CD14-positive monocyte (primary cell): ENCODE measurements at regions of chr16 and their contacts with region 1.

Region 1: DNA sequence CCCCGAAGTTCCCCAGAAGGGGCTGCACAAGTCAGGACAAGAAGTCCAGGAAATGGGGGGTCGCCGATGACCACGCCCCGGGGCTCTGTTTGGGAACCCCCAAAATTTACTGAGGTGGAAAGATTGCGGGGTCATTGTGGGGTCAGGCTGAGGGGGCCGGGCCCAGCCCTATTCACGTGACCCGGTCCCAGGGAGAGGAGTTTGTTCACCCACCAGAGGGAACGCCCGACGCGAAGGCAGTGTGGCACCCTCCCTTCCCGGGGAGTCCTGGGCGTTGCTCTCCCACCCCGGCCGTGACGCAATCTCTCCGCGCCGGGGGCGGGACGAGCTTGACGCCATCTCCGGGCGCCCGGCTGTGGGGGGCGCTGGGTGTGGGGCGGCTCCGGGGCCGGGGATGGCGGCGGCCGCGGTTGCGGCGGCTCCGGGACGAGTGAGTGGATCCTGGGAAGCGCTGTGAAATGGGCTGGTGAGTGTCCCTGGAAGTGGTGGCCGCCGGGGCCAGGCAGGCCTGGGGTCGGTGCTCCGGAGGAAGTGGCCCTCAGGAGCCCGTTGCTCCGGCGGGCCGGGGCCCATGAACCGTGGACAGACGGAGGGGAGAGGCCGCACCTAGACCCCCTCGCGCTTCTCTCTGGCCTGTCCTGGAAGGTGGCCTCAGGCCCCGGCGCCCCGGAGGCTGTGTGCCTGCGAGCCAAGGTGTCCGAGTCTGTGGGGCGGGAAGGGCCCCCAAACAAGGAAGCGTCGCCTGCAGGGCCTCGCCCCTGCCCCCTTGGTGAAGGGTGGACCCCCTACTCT is at the start of gene ATXN1L:
- DNase-seq: peak; percentile 85 to 96 (median 95)
- H3K4me3 ChIP-seq: peak within 1 kb of the TSS; percentile 74 to 98 (median 90)
- H3K4me3 Mint-ChIP-seq: peak within 1 kb of the TSS; percentile 90 to 93
- H3K27ac ChIP-seq: peak within 1 kb of the TSS; percentile 55 to 96
- H3K27ac Mint-ChIP-seq: peak within 1 kb of the TSS; percentile 91 to 98 (median 97)
- H3K4me1 ChIP-seq: peaks cover 13 to 21% of the 10 kb centered on the region in 2 donors
- H3K4me1 Mint-ChIP-seq: peaks cover 20% of the 10 kb centered on the region
- H3K27me3 ChIP-seq: no peaks in the 10 kb centered on the region
- H3K27me3 Mint-ChIP-seq: peaks cover 0 to 4% (median 2%) of the 10 kb centered on the region in 3 donors
- CTCF ChIP-seq: no peak
- polyA plus RNA-seq, gene ATXN1L: 6.7 to 27.9 (median 10.0) TPM

Region 2: DNA sequence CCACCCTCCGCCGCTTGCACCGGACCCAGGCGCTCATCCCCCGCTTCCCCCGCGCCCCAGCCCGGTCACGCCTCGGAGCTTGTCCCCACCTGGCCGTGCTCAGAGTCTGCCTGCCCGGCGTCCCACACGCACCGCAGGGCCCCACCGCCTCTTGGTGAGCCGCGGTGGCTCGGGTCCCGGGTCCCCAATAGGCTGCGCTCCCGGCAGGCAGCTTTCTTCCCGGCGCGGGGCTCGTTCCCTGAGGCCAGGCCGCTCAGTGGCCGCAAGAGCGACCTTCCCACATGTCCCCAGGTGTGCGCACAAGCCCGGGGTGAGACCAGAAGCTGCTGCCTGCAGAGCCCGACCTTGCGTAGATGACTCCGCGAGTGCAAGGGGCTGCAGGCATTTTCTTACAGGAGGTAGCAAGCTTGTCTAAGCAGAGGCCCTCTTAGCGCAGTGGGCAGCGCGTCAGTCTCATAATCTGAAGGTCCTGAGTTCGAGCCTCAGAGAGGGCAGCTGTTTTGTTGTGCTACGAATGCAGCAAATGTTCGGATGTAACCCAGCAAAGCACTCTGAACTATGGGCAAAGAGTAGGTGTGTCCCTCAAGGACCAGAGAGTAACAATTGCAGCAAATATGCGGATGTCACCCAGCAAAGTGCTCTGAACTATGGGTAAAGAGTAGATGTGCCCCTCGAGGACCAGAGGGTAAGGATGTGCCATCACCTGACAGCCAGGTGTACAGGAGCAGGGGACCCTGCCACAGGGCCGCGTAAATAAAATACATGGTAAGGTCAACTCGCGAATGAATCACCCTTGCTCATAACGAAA is 419.6 kb before region 1 on chr16:
- intact Hi-C with region 1: no loop called
- DNase-seq: no peak
- H3K4me3 ChIP-seq: no peak overlapping the region
- H3K4me3 Mint-ChIP-seq: peak overlapping the region in 1 of 2 donors; percentile 71
- H3K27ac ChIP-seq: no peak overlapping the region
- H3K27ac Mint-ChIP-seq: no peak overlapping the region
- H3K4me1 ChIP-seq: no peaks in the 10 kb centered on the region
- H3K4me1 Mint-ChIP-seq: no peaks in the 10 kb centered on the region
- H3K27me3 ChIP-seq: peaks cover 17 to 27% of the 10 kb centered on the region in 2 donors
- H3K27me3 Mint-ChIP-seq: peaks cover 36 to 42% (median 38%) of the 10 kb centered on the region in 3 donors
- CTCF ChIP-seq: no peak

Region 3: DNA sequence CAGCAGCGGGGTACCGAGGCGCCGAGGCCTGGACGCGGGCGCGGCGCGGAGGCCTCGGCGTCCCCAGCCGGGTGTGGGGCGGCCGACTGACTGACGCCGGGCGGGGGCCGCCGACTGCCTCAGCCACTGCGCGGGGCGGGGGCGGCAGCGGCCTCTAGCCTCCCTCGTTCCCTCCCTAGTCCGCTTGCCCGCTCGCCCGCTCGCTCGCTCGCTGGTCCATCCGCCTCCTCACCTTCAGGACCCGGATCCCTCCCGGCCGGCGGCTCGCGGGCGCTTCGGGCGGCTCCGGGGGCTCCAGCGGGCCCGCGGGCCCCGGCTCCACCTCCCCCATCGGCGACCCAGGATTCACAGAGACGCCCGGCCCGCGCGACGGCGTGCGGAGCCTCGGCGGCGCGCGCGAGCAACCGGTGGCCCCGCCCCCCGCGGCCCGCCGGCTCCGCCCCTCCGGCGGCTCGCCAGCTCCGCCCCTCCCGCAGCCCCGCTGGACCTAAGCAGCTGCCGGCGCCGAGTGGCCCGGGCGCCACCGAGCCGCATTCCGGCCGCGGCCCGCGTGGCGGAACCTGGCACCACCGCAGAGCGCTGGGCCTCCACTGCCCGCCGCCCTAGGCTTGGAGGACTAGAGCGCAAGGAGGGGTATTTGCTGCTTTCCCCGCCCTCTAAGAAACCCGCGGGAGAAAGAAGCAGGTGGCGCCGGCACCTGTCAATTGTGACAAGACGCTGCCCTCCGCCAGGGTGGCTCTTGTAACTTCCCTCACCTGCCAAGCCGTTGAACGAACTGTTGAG is 122.1 kb before region 1 on chr16:
- intact Hi-C with region 1: loop called in 1 of 2 experiments (anchors 5 kb)
- DNase-seq: peak; percentile 37 to 73 (median 71)
- H3K4me3 ChIP-seq: peak overlapping the region; percentile 43 to 81 (median 50)
- H3K4me3 Mint-ChIP-seq: peak overlapping the region; percentile 88 to 92
- H3K27ac ChIP-seq: no peak overlapping the region
- H3K27ac Mint-ChIP-seq: peak overlapping the region in 1 of 7 donors; percentile 65
- H3K4me1 ChIP-seq: peaks cover 44 to 48% of the 10 kb centered on the region in 2 donors
- H3K4me1 Mint-ChIP-seq: peaks cover 43% of the 10 kb centered on the region
- H3K27me3 ChIP-seq: peaks cover 9 to 19% of the 10 kb centered on the region in 2 donors
- H3K27me3 Mint-ChIP-seq: peaks cover 18 to 28% (median 20%) of the 10 kb centered on the region in 3 donors
- CTCF ChIP-seq: no peak

Region 4: DNA sequence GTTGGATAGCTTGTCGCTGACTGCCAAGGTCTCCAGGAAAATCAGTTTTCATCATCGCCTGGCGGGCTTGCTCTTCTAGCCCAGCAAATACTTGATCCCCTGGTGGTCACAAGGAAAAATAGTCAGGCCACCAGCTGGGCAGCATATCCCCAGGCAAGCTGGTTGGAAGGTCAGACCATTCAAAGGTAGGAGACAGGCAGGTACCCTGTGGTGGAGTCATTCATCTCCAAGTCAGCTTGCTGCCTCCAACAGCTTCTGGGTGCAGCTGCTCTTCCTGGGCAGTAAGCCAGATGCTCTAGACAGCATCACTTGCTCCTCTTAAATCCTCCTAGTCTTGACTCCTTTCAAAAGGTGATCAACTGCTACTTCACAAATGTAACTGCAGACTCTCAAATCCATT is 22.1 kb after region 1 on chr16:
- intact Hi-C with region 1: no loop called
- DNase-seq: no peak
- H3K4me3 ChIP-seq: no peak overlapping the region
- H3K4me3 Mint-ChIP-seq: no peak overlapping the region
- H3K27ac ChIP-seq: no peak overlapping the region
- H3K27ac Mint-ChIP-seq: no peak overlapping the region
- H3K4me1 ChIP-seq: no peaks in the 10 kb centered on the region
- H3K4me1 Mint-ChIP-seq: peaks cover 5% of the 10 kb centered on the region
- H3K27me3 ChIP-seq: no peaks in the 10 kb centered on the region
- H3K27me3 Mint-ChIP-seq: peaks cover 0 to 3% (median 0%) of the 10 kb centered on the region in 3 donors
- CTCF ChIP-seq: no peak

Region 5: DNA sequence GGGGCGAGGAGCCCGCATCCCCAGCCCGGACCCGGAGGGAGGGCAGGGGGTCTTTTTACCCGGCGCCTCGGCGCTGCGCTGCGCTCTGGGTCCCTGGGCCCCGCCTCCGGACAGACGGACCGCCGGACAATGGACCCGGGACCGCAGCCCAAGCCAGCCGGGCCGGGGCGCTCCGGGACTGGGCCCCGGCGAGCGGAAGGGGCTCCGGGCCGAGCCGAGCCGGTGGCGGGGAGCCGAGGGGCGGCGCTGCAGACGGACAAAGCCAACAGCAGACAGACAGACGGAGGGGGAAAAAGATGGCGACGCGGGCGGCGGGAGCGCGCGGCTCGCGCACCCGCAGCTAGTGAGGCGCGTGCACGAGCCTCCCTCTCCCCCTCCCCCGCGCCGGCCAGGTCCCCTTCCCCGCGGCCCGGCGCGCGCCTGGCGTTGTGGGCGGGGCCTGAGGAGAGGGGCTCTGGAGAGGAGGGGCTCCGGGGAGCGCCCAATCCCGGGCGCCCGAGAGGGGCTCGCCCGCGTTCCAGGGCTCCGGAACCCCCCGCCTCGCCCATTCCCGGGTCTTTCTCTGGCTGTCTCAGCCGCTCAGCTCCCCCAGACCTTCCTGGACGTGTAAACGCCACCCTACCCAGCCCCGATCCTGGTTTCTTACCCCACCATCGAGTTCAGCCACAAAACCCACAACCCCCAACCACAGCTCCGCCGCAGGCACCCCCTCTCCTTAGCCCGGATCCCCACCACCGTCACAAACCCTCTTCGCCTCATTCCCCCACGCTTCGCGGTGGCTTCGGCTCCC is 38.2 kb after region 1 on chr16 and contains the start of gene ZNF821:
- intact Hi-C with region 1: loop called (anchors 5 kb)
- DNase-seq: peak; percentile 66 to 75 (median 68)
- H3K4me3 ChIP-seq: peak within 1 kb of the TSS; percentile 63 to 85 (median 74)
- H3K4me3 Mint-ChIP-seq: peak within 1 kb of the TSS; percentile 97 to 98
- H3K27ac ChIP-seq: peak within 1 kb of the TSS; percentile 51 to 75
- H3K27ac Mint-ChIP-seq: peak within 1 kb of the TSS; percentile 81 to 95 (median 90)
- H3K4me1 ChIP-seq: peaks cover 42 to 45% of the 10 kb centered on the region in 2 donors
- H3K4me1 Mint-ChIP-seq: peaks cover 47% of the 10 kb centered on the region
- H3K27me3 ChIP-seq: no peaks in the 10 kb centered on the region
- H3K27me3 Mint-ChIP-seq: peaks cover 2 to 11% (median 7%) of the 10 kb centered on the region in 3 donors
- CTCF ChIP-seq: peak; percentile 46
- polyA plus RNA-seq, gene ZNF821: 3.1 to 5.4 (median 4.9) TPM

Region 6: DNA sequence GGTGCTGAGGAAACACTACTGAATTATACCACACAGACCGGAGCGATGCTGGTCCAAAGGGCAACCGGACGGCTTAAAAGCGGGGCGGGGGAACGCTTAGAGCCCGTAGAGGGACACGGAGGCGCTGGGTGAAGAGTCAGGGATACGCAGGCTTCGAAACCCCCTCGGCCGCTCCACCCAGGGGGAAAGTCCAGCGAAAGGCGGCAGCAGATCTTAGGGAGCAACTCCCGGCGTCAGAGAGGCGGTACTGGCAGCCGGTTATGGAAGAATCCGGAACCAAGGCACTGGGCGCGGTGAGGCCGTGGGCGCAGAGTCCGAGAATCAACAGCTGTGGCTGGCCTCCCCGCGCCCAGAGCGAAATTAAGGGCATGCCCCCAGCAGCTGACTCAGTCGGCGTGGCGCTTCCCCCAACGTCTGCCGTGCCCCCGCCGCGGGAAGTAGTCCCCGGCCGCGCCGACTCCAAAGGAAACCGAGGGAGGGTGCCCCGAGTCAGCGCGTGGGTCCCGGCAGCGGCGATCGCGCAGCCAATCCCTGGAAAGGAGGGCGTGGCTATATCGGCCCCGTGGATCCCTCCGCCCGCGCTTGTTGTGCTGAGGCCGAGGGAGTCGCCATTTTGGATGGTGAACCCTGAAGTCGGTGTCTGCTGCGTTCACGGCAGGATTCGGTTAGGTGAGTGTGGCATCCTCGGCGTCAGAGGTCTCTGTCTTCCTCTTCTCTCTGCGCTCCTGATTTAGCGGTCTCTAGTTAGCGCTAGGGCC is 49.3 kb after region 1 on chr16 and contains the start of gene IST1:
- intact Hi-C with region 1: loop called in 1 of 2 experiments (anchors 5 kb)
- DNase-seq: peak; percentile 97 to 98 (median 98)
- H3K4me3 ChIP-seq: peak within 1 kb of the TSS; percentile 68 to 98 (median 78)
- H3K4me3 Mint-ChIP-seq: peak within 1 kb of the TSS; percentile 98 to 99
- H3K27ac ChIP-seq: peak within 1 kb of the TSS; percentile 91 to 93
- H3K27ac Mint-ChIP-seq: peak within 1 kb of the TSS; percentile 96 to 99 (median 99)
- H3K4me1 ChIP-seq: peaks cover 29 to 50% of the 10 kb centered on the region in 2 donors
- H3K4me1 Mint-ChIP-seq: peaks cover 39% of the 10 kb centered on the region
- H3K27me3 ChIP-seq: no peaks in the 10 kb centered on the region
- H3K27me3 Mint-ChIP-seq: peaks cover 0 to 1% (median 0%) of the 10 kb centered on the region in 3 donors
- CTCF ChIP-seq: no peak
- polyA plus RNA-seq, gene IST1: 81.3 to 233 (median 102) TPM